ENCODE measurements at regions of chr17 and their contacts with region 1.

Region 1: GRCh38 chr17:6444570-6445335 is 498 bp downstream of the PIMREG start:
- DNase-seq: no peak
- H3K4me3 ChIP-seq: peak overlapping the region; percentile 75
- H3K27me3 ChIP-seq: no peaks in the 10 kb centered on the region
- CTCF ChIP-seq: no peak

Region 2: GRCh38 chr17:5942687-5943086 is 502.1 kb before region 1 on chr17:
- CTCF ChIA-PET with region 1: no interaction called
- POLR2A ChIA-PET with region 1: interaction called, 38 read pairs
- DNase-seq: no peak
- H3K4me3 ChIP-seq: no peak overlapping the region
- H3K27me3 ChIP-seq: no peaks in the 10 kb centered on the region; the same call in none of the 2 replicates
- CTCF ChIP-seq: no peak

Region 3: GRCh38 chr17:6454957-6455705 is 10.4 kb after region 1 on chr17:
- CTCF ChIA-PET with region 1: no interaction called
- POLR2A ChIA-PET with region 1: no interaction called
- DNase-seq: no peak
- H3K4me3 ChIP-seq: peak overlapping the region; percentile 1; the same call in 1 of the 2 replicates
- H3K27me3 ChIP-seq: no peaks in the 10 kb centered on the region
- CTCF ChIP-seq: no peak

Region 4: GRCh38 chr17:6496116-6496481 is 51.3 kb after region 1 on chr17:
- CTCF ChIA-PET with region 1: no interaction called
- POLR2A ChIA-PET with region 1: no interaction called
- DNase-seq: no peak
- H3K4me3 ChIP-seq: no peak overlapping the region
- H3K27me3 ChIP-seq: peaks cover 2% of the 10 kb centered on the region; the same call in 1 of the 2 replicates
- CTCF ChIP-seq: no peak